ENCODE measurements at regions of chr6 and their contacts with region 1.

Region 1: GRCh38 chr6:52304983-52305390 is 20.4 kb upstream of the MCM3 start:
- DNase-seq: peak in 1 of 10 donors; percentile 16
- ATAC-seq: peak; percentile 19 to 24
- H3K4me3 Mint-ChIP-seq: peak overlapping the region; percentile 46 to 84 (median 76)
- H3K27ac Mint-ChIP-seq: peak overlapping the region; percentile 91 to 99 (median 95)
- H3K4me1 Mint-ChIP-seq: peaks cover 46 to 78% (median 74%) of the 10 kb centered on the region in 4 donors
- H3K27me3 Mint-ChIP-seq: no peaks in the 10 kb centered on the region

Region 2: DNA sequence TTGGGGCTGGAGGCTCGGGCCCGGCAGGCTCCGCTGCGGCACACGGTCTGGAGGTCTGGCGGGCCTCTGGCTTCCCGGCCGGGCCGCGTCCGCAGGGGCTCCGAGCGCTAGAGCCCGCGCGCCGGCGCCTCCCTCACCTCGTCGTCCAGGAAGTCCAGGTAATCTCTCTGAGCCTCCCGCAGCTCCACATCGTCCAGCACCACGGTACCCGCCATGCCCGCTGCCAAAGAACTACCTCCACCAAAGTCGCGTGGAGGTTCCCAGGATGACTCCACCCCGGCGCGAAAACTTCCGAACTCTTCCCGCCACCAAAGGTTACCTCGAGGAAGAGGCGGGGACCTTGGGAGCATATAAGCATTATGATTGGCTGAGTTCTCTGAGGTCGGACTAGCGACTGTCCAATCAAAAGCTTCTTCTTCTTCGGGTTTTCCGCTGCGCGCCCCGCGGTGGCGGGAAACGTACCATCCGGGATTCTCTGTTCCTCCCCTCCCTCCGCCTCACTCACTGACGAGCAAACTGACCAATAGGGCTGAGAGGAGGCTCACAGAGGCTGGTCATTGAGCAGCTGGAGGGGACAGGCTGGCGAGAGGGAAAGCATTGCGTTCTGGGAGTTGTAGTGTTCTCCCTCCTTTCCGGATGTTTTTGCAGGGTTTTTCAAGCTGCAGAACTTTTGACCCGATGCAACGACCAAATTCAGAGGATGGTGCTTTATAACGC is 20.4 kb before region 1 on chr6 and contains the start of gene MCM3:
- POLR2A ChIA-PET with region 1: interaction called, 24 read pairs
- DNase-seq: peak; percentile 79 to 98 (median 95)
- ATAC-seq: peak; percentile 94
- H3K4me3 Mint-ChIP-seq: peak within 1 kb of the TSS in 6 of 10 donors; percentile 27 to 72 (median 62)
- H3K27ac Mint-ChIP-seq: peak within 1 kb of the TSS in 4 of 10 donors; percentile 19 to 65 (median 46)
- H3K4me1 Mint-ChIP-seq: peaks cover 12 to 46% (median 35%) of the 10 kb centered on the region in 4 donors
- H3K27me3 Mint-ChIP-seq: no peaks in the 10 kb centered on the region
- polyA plus RNA-seq, gene MCM3: 45.5 to 63.5 (median 57.7) TPM

Region 3: GRCh38 chr6:52337633-52338290 is 32.8 kb after region 1 on chr6:
- POLR2A ChIA-PET with region 1: interaction called, 36 read pairs
- DNase-seq: no peak
- ATAC-seq: no peak
- H3K4me3 Mint-ChIP-seq: peak overlapping the region in 2 of 10 donors; percentile 3 to 47
- H3K27ac Mint-ChIP-seq: peak overlapping the region in 7 of 10 donors; percentile 1 to 92 (median 61)
- H3K4me1 Mint-ChIP-seq: peaks cover 46 to 71% (median 64%) of the 10 kb centered on the region in 4 donors
- H3K27me3 Mint-ChIP-seq: no peaks in the 10 kb centered on the region

Region 4: GRCh38 chr6:52389626-52390360 is 84.8 kb after region 1 on chr6:
- POLR2A ChIA-PET with region 1: interaction called, 12 read pairs
- DNase-seq: peak; percentile 41 to 80 (median 65)
- ATAC-seq: peak; percentile 47 to 59
- H3K4me3 Mint-ChIP-seq: peak overlapping the region; percentile 71 to 93 (median 86)
- H3K27ac Mint-ChIP-seq: peak overlapping the region; percentile 93 to 100 (median 97)
- H3K4me1 Mint-ChIP-seq: peaks cover 51 to 93% (median 92%) of the 10 kb centered on the region in 4 donors
- H3K27me3 Mint-ChIP-seq: no peaks in the 10 kb centered on the region

Region 5: DNA sequence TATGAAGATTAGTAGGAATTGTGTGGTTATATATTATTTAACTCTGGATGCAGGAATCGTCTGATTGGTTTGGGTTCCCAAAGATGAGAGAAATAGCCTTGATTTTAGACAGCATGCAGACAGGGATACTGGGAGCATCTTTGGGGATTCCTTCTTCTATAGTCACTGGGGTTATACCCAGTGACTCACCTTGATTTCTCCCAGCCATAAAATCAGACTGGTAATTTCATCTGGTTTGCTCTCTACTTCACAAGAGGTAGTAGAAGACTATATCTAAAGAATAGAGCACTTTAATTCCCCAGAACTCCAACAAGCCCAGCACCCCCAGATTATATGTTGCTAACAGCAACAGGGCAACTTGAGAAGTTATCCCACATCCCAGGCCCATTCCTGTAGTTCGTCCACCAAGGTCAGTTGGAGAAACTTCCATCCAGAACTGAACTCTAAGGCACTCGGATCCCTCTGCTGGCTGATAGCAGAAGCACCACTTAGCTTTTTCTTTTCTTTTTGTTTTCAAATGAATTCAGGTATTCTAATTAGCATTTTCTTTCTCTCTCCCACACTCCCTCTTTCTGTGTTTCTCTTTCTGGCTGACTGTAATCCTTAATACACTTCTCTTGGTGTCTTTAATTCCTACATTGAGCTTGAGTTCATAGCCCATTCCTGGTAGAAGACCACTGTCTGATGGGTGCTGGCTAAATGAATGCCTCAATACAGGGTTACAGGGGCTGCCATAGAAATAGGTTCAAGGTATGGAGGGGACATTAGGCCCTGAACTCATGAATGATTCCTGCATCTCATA is 94.7 kb after region 1 on chr6:
- POLR2A ChIA-PET with region 1: interaction called, 11 read pairs
- DNase-seq: peak in 5 of 10 donors; percentile 39 to 64 (median 54)
- ATAC-seq: peak; percentile 24 to 27
- H3K4me3 Mint-ChIP-seq: peak overlapping the region; percentile 42 to 83 (median 68)
- H3K27ac Mint-ChIP-seq: peak overlapping the region; percentile 93 to 100 (median 96)
- H3K4me1 Mint-ChIP-seq: peaks cover 49 to 86% (median 72%) of the 10 kb centered on the region in 4 donors
- H3K27me3 Mint-ChIP-seq: no peaks in the 10 kb centered on the region

Measured in naive thymus-derived CD8-positive, alpha-beta T cell (primary cell).